Caco-2 (cell line): ENCODE measurements at regions of chr1 and their contacts with region 1.

Region 1: GRCh38 chr1:227234998-227235405 is 83.3 kb downstream of the CDC42BPA start:
- DNase-seq: peak; percentile 74 to 78
- H3K4me3 ChIP-seq: no peak overlapping the region
- H3K4me3 Mint-ChIP-seq: no peak overlapping the region
- H3K27ac Mint-ChIP-seq: no peak overlapping the region
- H3K4me1 ChIP-seq: no peaks in the 10 kb centered on the region
- H3K4me1 Mint-ChIP-seq: peaks cover 10% of the 10 kb centered on the region
- H3K27me3 ChIP-seq: no peaks in the 10 kb centered on the region
- H3K27me3 Mint-ChIP-seq: no peaks in the 10 kb centered on the region
- CTCF ChIP-seq: peak; percentile 64 to 67

Region 2: DNA sequence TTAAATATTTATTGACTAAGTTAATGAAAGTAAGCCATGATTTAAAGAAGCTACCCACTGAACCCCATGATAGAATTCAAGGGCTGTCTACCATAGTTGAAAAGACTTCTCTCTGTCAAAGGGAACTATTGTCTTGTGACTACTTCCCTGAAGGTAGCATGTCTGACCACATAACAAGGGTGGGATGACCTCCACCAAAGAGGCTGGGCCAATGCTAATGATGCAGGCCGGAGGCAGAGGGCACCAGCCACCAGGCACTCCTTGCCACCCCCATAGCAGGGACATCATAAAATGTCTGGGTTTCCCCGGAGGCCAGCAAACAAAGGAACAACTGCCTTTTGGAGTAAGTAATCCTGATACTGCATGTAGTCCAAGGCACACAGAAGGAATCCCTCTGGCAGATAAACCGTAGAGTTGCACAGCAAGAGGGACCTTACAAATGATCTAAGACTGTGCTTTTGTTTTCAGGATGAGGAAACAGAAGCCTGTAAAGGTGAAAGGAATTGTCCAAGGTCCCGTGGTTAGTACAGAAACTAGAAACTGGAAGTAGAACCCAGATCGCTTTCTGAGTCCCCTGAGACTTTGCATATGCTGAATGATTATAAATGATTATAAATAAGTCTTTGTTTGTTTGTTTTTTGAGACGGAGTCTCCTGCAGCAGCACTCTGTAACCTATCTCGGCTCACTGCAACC is 462.4 kb before region 1 on chr1:
- CTCF ChIA-PET with region 1: no interaction called
- POLR2A ChIA-PET with region 1: no interaction called
- intact Hi-C with region 1: loop called (anchors 5 kb)
- DNase-seq: no peak
- H3K4me3 ChIP-seq: no peak overlapping the region
- H3K4me3 Mint-ChIP-seq: no peak overlapping the region
- H3K27ac Mint-ChIP-seq: no peak overlapping the region
- H3K4me1 ChIP-seq: no peaks in the 10 kb centered on the region
- H3K4me1 Mint-ChIP-seq: no peaks in the 10 kb centered on the region
- H3K27me3 ChIP-seq: no peaks in the 10 kb centered on the region
- H3K27me3 Mint-ChIP-seq: peaks cover 8% of the 10 kb centered on the region
- CTCF ChIP-seq: no peak

Region 3: GRCh38 chr1:227245613-227246320 is 10.8 kb after region 1 on chr1:
- CTCF ChIA-PET with region 1: no interaction called
- POLR2A ChIA-PET with region 1: no interaction called
- intact Hi-C with region 1: no loop called
- DNase-seq: no peak
- H3K4me3 ChIP-seq: no peak overlapping the region
- H3K4me3 Mint-ChIP-seq: no peak overlapping the region
- H3K27ac Mint-ChIP-seq: peak overlapping the region; percentile 73
- H3K4me1 ChIP-seq: peaks cover 48% of the 10 kb centered on the region
- H3K4me1 Mint-ChIP-seq: peaks cover 43% of the 10 kb centered on the region
- H3K27me3 ChIP-seq: no peaks in the 10 kb centered on the region
- H3K27me3 Mint-ChIP-seq: no peaks in the 10 kb centered on the region
- CTCF ChIP-seq: no peak

Region 4: GRCh38 chr1:227280836-227281235 is 45.8 kb after region 1 on chr1:
- CTCF ChIA-PET with region 1: no interaction called
- POLR2A ChIA-PET with region 1: no interaction called
- intact Hi-C with region 1: no loop called
- DNase-seq: no peak
- H3K4me3 ChIP-seq: no peak overlapping the region
- H3K4me3 Mint-ChIP-seq: no peak overlapping the region
- H3K27ac Mint-ChIP-seq: no peak overlapping the region
- H3K4me1 ChIP-seq: no peaks in the 10 kb centered on the region
- H3K4me1 Mint-ChIP-seq: no peaks in the 10 kb centered on the region
- H3K27me3 ChIP-seq: no peaks in the 10 kb centered on the region
- H3K27me3 Mint-ChIP-seq: no peaks in the 10 kb centered on the region
- CTCF ChIP-seq: no peak

Region 5: DNA sequence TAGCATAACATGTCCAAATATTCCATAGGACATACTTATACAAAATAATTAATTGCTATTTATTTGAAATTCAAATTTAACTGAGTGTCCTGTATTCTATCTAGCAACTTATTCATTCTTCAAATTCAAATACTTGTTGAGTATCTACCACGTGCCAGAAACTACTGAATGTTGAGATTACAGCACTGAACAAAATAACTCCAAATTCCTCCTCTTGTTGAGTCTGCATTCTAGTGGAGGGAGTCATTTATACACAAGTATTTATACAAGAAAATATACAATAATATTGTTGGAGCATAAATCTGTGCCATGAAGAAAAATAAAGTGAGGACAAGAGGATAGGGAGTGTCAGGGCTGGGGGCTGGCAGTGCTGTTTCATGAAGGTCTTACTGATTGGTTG is 127.0 kb after region 1 on chr1:
- CTCF ChIA-PET with region 1: no interaction called
- POLR2A ChIA-PET with region 1: no interaction called
- intact Hi-C with region 1: no loop called
- DNase-seq: no peak
- H3K4me3 ChIP-seq: no peak overlapping the region
- H3K4me3 Mint-ChIP-seq: no peak overlapping the region
- H3K27ac Mint-ChIP-seq: no peak overlapping the region
- H3K4me1 ChIP-seq: peaks cover 10% of the 10 kb centered on the region
- H3K4me1 Mint-ChIP-seq: peaks cover 4% of the 10 kb centered on the region
- H3K27me3 ChIP-seq: no peaks in the 10 kb centered on the region
- H3K27me3 Mint-ChIP-seq: no peaks in the 10 kb centered on the region
- CTCF ChIP-seq: no peak